Tibial artery (tissue), 4 donors: ENCODE measurements at regions of chr1 and their contacts with region 1.

Region 1: GRCh38 chr1:58515794-58516401 is 30.6 kb downstream of the OMA1 start:
- DNase-seq: peak in 1 of 2 donors; percentile 25
- H3K4me3 ChIP-seq: no peak overlapping the region
- H3K27ac ChIP-seq: no peak overlapping the region
- H3K4me1 ChIP-seq: no peaks in the 10 kb centered on the region
- H3K27me3 ChIP-seq: no peaks in the 10 kb centered on the region
- CTCF ChIP-seq: peak; percentile 58 to 82

Region 2: DNA sequence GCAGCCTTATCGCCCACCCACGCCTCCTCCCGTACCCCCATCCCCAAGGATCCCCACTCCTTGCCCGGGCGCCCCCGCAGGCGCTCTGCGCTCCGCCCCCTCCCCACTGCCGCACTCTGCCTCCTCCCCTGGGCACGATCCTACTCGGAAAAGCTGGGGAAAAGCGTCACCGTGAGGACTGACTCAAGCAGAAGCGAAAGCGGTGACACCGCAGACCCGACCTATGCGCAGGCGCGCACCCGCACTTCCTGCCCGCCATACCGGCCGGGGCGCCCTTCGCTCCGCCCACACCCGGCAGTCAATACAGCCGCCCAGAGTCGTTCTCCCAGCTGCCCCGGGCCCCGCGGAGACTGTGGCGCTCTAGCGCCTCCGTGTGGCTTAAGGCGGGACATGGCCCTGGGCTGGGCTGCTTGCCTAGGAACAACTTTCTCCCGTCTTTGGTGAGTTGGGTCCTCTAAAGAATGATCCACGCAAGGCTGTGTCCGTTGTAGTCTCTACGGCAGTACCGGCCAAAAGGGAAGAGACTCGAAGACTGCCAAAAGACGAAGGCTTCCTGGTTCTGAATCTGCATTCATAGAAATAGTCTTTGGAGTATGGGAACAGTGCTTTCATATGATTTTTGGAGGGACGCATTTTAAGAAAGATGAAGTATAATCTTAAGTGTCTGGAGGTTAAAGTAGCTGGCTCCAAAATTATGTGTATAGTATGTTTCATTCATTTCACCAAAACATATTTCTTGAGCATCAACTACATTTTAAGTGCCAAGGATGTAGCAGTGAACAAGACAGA is 30.8 kb after region 1 on chr1 and contains the start of gene OMA1:
- intact Hi-C with region 1: loop called (anchors 5 kb)
- DNase-seq: peak; percentile 96 to 99
- H3K4me3 ChIP-seq: peak within 1 kb of the TSS; percentile 77 to 95
- H3K27ac ChIP-seq: peak within 1 kb of the TSS; percentile 99 to 100
- H3K4me1 ChIP-seq: peaks cover 0 to 12% (median 3%) of the 10 kb centered on the region in 4 donors
- H3K27me3 ChIP-seq: no peaks in the 10 kb centered on the region
- CTCF ChIP-seq: peak; percentile 96 to 98

Region 3: GRCh38 chr1:58652651-58653184 is 136.8 kb after region 1 on chr1:
- intact Hi-C with region 1: loop called (anchors 2 kb)
- DNase-seq: peak in 1 of 2 donors; percentile 54
- H3K4me3 ChIP-seq: no peak overlapping the region
- H3K27ac ChIP-seq: no peak overlapping the region
- H3K4me1 ChIP-seq: peaks cover 0 to 2% (median 0%) of the 10 kb centered on the region in 4 donors
- H3K27me3 ChIP-seq: no peaks in the 10 kb centered on the region
- CTCF ChIP-seq: peak; percentile 71 to 90